ENCODE measurements at regions of chr14 and their contacts with region 1.

Region 1: DNA sequence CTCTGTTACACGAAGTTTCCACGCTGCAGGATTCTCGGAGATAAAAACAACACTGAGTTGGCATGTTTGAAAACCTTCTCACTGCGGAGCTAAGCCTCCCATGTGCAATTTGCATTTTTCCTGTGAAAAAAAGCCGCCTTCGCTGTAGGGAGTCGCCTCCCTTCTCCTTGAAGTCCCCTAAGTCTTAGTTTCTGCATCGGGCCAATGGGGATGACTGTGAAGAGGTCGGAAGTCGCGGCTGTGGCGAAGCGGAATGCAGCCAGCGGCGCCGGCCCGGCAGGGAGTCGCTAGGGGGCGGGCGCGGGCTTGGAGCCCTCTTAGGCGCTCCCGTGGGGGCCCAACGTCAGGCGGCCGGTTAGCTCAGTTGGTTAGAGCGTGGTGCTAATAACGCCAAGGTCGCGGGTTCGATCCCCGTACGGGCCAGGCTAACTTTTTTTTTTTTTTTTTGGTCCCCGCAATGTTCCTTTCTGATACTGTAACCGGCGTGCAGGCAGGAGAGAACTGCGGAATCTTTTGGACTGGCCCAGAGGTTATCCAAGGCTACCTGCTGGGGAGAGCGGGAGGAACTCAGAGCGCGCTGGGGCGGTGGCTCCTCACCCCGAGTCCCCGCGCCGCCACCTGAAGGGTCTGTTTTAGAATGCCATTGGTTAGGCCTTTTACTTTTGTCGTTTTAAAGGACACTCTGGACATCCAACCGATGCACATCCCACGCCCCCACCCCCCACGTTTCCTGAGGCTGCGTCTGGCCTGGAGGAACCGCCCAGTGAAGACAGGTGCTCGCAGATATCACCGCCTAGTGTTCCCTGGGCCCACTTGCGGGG is 2.6 kb upstream of the ZNF839 start:
- DNase-seq: peak; percentile 91 to 96
- ATAC-seq: peak; percentile 72 to 76 (median 74)
- H3K4me3 ChIP-seq: peak overlapping the region; percentile 70
- H3K27ac ChIP-seq: peak overlapping the region; percentile 99
- H3K4me1 ChIP-seq: peaks cover 33% of the 10 kb centered on the region
- H3K27me3 ChIP-seq: no peaks in the 10 kb centered on the region
- CTCF ChIP-seq: peak; percentile 73

Region 2: DNA sequence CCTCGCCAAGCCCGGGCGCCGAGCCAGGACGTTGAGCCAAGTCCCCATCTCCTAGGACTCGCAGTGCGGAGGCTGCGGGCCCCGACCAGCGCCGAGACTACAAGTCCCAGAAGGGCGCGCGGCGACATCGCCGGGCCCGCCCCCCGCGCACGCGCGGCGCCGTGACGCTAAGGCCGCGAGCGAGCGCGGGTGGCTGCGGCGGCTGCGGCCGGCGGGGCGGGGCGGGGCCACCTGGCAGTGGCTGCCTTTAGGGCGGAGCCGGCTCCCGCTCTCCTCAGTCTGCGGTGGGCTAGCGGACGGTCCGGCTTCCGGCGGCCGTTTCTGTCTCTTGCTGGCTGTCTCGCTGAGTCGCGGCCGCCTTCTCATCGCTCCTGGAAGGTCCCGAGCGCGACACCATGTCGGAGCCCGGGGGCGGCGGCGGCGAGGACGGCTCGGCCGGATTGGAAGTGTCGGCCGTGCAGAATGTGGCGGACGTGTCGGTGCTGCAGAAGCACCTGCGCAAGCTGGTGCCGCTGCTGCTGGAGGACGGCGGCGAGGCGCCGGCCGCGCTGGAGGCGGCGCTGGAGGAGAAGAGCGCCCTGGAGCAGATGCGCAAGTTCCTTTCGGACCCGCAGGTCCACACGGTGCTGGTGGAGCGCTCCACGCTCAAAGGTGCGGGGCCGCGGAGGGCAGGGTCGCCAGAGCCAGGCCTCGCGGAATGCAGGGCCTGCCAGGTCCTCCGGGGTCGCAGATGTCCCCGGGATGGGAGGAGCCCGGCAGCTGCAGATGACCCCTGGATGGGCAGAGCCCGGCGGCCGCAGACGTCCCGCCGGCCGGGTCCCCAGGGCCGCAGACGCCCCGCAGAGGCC is 352.4 kb before region 1 on chr14 and contains the start of gene DYNC1H1:
- intact Hi-C with region 1: loop called (anchors 10 kb)
- DNase-seq: peak; percentile 97
- ATAC-seq: peak; percentile 87 to 92 (median 90)
- H3K4me3 ChIP-seq: peak within 1 kb of the TSS; percentile 98
- H3K27ac ChIP-seq: peak within 1 kb of the TSS; percentile 96
- H3K4me1 ChIP-seq: peaks cover 32% of the 10 kb centered on the region
- H3K27me3 ChIP-seq: no peaks in the 10 kb centered on the region
- CTCF ChIP-seq: no peak
- total RNA-seq, gene DYNC1H1: 332 to 634 (median 549) TPM

Region 3: DNA sequence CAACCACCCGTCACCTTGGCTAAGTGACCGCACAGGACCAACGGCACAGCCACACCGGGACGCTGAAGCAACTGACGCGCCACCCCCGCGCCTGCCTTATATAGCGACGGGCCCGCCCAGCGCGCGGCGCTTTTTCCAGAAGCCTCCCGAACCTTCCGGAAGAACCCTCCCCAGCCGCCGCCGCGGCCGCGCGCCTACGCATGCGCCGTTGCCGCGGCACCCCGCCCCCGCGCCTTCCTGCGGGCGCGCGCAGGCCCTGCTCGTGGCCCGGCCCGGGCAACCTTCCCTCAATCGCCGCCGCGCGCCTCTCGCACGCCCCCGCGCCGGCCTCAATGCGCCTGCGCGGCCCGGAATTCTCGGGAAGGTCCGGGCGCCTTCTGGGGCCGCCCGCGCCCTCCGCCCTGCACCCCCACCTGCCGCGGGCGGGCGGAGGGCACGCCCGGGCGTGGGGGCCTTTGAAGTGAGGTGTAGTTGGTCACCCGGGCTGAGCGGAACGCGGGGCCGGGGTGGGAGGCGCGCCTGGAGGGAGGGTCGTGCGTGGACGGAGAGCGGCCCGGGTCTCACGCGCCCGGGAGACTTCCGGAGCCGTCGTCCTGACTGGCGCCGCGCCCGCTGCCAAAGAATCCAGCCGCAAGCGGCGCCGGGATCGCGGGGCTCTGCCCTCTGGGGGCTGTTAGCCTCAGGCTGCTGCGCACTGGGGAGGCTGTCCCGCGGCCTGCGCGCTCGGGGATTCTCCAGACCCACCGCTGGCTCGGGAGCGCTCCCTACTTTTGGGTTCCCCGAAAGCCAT is 229.8 kb before region 1 on chr14 and contains the start of gene HSP90AA1:
- intact Hi-C with region 1: loop called in 1 of 2 experiments (anchors 5 kb)
- DNase-seq: peak; percentile 95 to 98
- ATAC-seq: peak; percentile 90 to 94 (median 92)
- H3K4me3 ChIP-seq: peak within 1 kb of the TSS; percentile 80
- H3K27ac ChIP-seq: peak within 1 kb of the TSS; percentile 97
- H3K4me1 ChIP-seq: peaks cover 42% of the 10 kb centered on the region
- H3K27me3 ChIP-seq: no peaks in the 10 kb centered on the region
- CTCF ChIP-seq: peak; percentile 12
- total RNA-seq, gene HSP90AA1: 398 to 659 (median 540) TPM

Region 4: GRCh38 chr14:102235275-102235897 is 81.6 kb before region 1 on chr14:
- intact Hi-C with region 1: loop called (anchors 1 to 2 kb)
- DNase-seq: peak; percentile 85 to 86
- ATAC-seq: peak; percentile 84 to 96 (median 92)
- H3K4me3 ChIP-seq: peak overlapping the region; percentile 18
- H3K27ac ChIP-seq: no peak overlapping the region
- H3K4me1 ChIP-seq: no peaks in the 10 kb centered on the region
- H3K27me3 ChIP-seq: no peaks in the 10 kb centered on the region
- CTCF ChIP-seq: peak; percentile 78

Region 5: DNA sequence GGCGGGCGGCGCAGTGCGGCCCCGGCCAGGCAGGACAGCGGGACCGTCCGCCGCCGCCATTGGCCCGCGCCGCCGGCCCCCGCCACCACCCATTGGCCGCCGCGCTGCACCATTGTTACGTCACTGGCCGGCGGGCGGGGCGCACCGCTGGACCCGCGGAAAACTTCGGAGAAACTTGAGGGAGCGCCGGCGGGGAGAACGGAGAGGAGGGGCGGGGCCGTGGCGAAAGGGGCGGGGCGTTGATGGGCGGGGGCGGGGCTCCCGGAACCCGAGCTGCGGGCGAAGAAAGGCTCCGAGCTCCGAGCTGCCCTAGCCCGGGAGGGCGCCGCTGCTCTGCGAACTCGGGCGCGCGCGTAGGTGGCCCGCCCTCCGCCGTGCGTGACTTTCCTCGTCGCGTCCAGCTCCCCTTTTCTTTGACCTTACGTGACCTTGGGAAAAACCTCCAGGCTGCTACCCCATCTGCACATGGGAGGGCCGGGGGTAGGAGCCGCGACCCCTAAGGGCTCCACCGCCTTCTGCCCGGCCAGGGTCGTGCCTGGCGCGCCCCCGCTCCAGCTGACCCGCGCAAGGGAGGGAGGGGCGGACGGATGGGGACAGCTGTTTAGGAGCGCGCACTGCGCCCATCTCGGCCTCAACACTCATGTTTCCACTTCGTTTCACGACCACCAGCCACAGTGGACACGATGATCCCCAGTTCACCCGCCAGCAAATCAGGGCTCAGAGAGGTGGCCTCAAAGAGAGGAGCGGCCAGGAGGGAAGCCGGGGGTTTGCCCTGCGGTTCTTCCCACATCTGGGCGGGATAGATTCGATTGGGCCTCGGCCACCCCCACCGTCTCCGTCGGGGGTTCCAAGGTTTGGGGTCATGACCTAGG is 193.0 kb after region 1 on chr14 and contains the start of gene ANKRD9:
- intact Hi-C with region 1: loop called in 1 of 2 experiments (anchors 5 kb)
- DNase-seq: peak; percentile 98
- ATAC-seq: peak; percentile 77 to 82 (median 80)
- H3K4me3 ChIP-seq: peak within 1 kb of the TSS; percentile 84
- H3K27ac ChIP-seq: peak within 1 kb of the TSS; percentile 96
- H3K4me1 ChIP-seq: peaks cover 11% of the 10 kb centered on the region
- H3K27me3 ChIP-seq: no peaks in the 10 kb centered on the region
- CTCF ChIP-seq: no peak
- total RNA-seq, gene ANKRD9: 48.1 to 126 (median 98.0) TPM